IMR-90 (cell line): ENCODE measurements at regions of chr2 and their contacts with region 1.

Region 1: GRCh38 chr2:237280229-237280628 is 133.7 kb downstream of the COL6A3 start:
- DNase-seq: peak; percentile 99
- ATAC-seq: peak; percentile 73
- H3K4me3 ChIP-seq: no peak overlapping the region
- H3K27ac ChIP-seq: peak overlapping the region; percentile 98
- H3K4me1 ChIP-seq: peaks cover 36% of the 10 kb centered on the region
- H3K27me3 ChIP-seq: no peaks in the 10 kb centered on the region
- CTCF ChIP-seq: 0 out of 2 replicates have a peak, but pooled peaks have one; percentile 16
- POLR2A ChIP-seq: peak; percentile 89
- RAD21 ChIP-seq: peak; percentile 45

Region 2: GRCh38 chr2:236928380-236929037 is 351.7 kb before region 1 on chr2:
- CTCF ChIA-PET with region 1: no interaction called
- POLR2A ChIA-PET with region 1: no interaction called
- dilution Hi-C with region 1: no loop called
- in situ Hi-C with region 1: no loop called
- intact Hi-C with region 1: no loop called
- DNase-seq: no peak
- ATAC-seq: peak; percentile 42; the same call in 1 of the 2 replicates
- H3K4me3 ChIP-seq: no peak overlapping the region; the same call in 1 of the 2 replicates
- H3K27ac ChIP-seq: no peak overlapping the region
- H3K4me1 ChIP-seq: no peaks in the 10 kb centered on the region
- H3K27me3 ChIP-seq: peaks cover 4% of the 10 kb centered on the region
- CTCF ChIP-seq: no peak
- POLR2A ChIP-seq: no peak
- RAD21 ChIP-seq: no peak

Region 3: GRCh38 chr2:237181844-237182243 is 98.4 kb before region 1 on chr2:
- CTCF ChIA-PET with region 1: no interaction called
- POLR2A ChIA-PET with region 1: interaction called, 3 read pairs
- dilution Hi-C with region 1: no loop called
- in situ Hi-C with region 1: no loop called
- intact Hi-C with region 1: loop called (anchors 2 kb)
- DNase-seq: peak; percentile 100
- ATAC-seq: peak; percentile 43
- H3K4me3 ChIP-seq: no peak overlapping the region
- H3K27ac ChIP-seq: peak overlapping the region; percentile 93
- H3K4me1 ChIP-seq: peaks cover 42% of the 10 kb centered on the region
- H3K27me3 ChIP-seq: no peaks in the 10 kb centered on the region
- CTCF ChIP-seq: no peak
- POLR2A ChIP-seq: no peak
- RAD21 ChIP-seq: no peak; the same call in 1 of the 2 replicates

Region 4: DNA sequence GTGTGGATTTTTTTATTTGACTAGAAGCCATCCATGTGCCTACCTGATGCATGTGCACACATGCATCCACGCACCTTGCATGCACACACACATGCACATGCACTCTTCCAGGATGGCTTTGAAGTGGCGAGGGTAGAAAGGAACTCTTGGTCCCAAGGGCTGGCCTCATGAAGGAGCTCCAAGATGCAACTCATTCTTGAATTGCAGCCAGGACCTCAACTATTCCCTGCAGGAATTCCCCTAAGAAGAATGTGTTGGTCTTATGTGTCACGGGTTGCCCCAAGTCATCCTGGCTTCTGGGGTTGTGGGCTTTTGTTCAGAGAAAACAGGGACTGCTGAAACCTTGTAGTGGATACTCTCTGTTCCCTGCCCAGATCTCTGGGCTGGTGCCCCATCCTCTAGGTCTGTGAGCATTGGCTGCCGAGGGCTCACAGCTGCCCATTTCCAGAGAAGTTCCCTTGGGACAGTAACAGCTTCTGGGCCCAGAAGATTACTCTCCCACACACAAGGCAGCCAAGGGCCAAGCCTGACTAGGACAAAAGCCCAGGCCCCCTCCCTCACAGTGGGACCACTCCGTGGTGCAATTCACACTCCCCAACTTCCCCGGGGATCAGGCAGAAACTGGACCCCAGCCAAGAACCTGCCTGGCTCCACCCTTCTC is 56.9 kb before region 1 on chr2:
- CTCF ChIA-PET with region 1: interaction called, 3 read pairs
- POLR2A ChIA-PET with region 1: interaction called, 11 read pairs
- dilution Hi-C with region 1: no loop called
- in situ Hi-C with region 1: no loop called
- intact Hi-C with region 1: loop called (anchors 1 kb)
- DNase-seq: peak; percentile 100
- ATAC-seq: peak; percentile 64
- H3K4me3 ChIP-seq: no peak overlapping the region
- H3K27ac ChIP-seq: peak overlapping the region; percentile 99
- H3K4me1 ChIP-seq: peaks cover 30% of the 10 kb centered on the region
- H3K27me3 ChIP-seq: no peaks in the 10 kb centered on the region
- CTCF ChIP-seq: no peak
- POLR2A ChIP-seq: peak; percentile 58; the same call in 1 of the 2 replicates
- RAD21 ChIP-seq: peak; percentile 42

Region 5: GRCh38 chr2:237291138-237291792 is 11.0 kb after region 1 on chr2:
- CTCF ChIA-PET with region 1: interaction called, 4 read pairs
- POLR2A ChIA-PET with region 1: interaction called, 8 read pairs
- dilution Hi-C with region 1: no loop called
- in situ Hi-C with region 1: no loop called
- intact Hi-C with region 1: loop called (anchors 1 kb)
- DNase-seq: peak; percentile 98
- ATAC-seq: peak; percentile 86
- H3K4me3 ChIP-seq: no peak overlapping the region
- H3K27ac ChIP-seq: peak overlapping the region; percentile 96
- H3K4me1 ChIP-seq: peaks cover 15% of the 10 kb centered on the region
- H3K27me3 ChIP-seq: no peaks in the 10 kb centered on the region
- CTCF ChIP-seq: no peak
- POLR2A ChIP-seq: peak; percentile 61
- RAD21 ChIP-seq: peak; percentile 32

Region 6: DNA sequence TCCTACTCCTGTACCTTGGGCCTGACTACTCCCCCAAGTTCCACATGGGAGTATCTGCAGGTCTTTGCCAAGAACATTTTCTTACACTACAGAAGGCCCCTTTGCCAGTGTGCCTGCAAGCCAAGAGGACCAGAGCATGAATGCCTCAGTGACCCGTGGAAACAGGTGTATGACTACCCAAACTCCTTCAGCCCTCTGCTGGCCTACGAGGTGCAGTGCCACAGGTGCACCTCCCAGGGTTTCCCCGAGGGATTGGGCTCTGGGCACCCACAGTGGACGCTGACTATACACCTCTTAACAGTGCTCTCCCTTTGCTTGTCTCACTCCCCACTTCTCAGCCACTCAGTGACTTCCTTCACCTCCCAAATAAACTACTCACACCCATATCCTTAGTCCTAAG is 42.3 kb after region 1 on chr2:
- CTCF ChIA-PET with region 1: no interaction called
- POLR2A ChIA-PET with region 1: interaction called, 7 read pairs
- dilution Hi-C with region 1: no loop called
- in situ Hi-C with region 1: no loop called
- intact Hi-C with region 1: loop called (anchors 2 kb)
- DNase-seq: no peak
- ATAC-seq: no peak
- H3K4me3 ChIP-seq: no peak overlapping the region
- H3K27ac ChIP-seq: peak overlapping the region; percentile 96
- H3K4me1 ChIP-seq: peaks cover 27% of the 10 kb centered on the region
- H3K27me3 ChIP-seq: no peaks in the 10 kb centered on the region
- CTCF ChIP-seq: peak; percentile 27; the same call in 1 of the 2 replicates
- POLR2A ChIP-seq: peak; percentile 16
- RAD21 ChIP-seq: peak; percentile 24; the same call in 1 of the 2 replicates